Activated B cell treated with CpG ODN at 0.5 μM for 24 hours (primary cell): ENCODE measurements at regions of chr17 and their contacts with region 1.

Region 1: GRCh38 chr17:39730095-39730921 is at the start of gene MIEN1:
- DNase-seq: peak; percentile 99
- ATAC-seq: peak; percentile 91
- H3K4me3 Mint-ChIP-seq: peak within 1 kb of the TSS; percentile 88
- H3K27ac Mint-ChIP-seq: peak within 1 kb of the TSS; percentile 86
- H3K4me1 Mint-ChIP-seq: peaks cover 21% of the 10 kb centered on the region
- H3K27me3 Mint-ChIP-seq: no peaks in the 10 kb centered on the region
- CTCF ChIP-seq: peak; percentile 64
- total RNA-seq, gene MIEN1: 42.2 and 45.7 TPM in 2 replicates

Region 2: DNA sequence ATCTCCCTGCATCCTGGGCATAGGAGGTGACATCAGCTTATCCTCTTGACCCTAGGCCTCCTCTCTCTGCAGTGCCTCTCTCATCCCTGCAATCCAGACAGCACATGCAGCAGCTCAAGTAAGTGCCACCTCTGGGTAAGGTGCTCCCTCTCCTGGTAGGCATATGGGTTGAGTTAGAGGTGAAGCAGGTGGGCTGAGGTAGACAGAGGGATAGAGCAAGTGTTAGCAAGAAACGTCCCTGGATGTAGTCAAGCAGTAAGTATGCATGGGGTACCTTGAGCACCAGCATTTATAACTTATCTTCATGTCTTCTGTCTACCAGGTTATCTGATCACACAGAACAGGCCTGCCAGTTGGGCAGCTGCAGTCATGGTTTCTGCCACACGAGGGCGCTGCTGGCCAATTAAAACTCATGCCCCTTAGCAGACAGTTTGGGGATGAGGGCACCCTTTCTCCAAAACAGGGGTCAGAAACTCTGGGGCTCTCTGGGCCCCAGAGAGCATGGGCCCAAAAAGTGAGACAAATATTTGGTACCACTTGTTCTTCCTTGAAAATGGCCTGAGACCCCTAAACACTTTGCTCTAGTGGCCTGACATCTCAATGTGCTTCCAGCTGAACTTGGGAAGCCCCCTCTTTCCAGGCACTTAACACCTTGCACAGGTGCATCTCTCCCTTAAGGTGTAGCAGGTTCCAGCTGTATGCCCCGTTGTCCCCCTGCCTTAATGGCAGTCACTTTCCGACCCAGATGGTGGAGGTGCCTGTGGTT is 182.4 kb before region 1 on chr17:
- CTCF ChIA-PET with region 1: no interaction called
- POLR2A ChIA-PET with region 1: interaction called, 7 read pairs
- intact Hi-C with region 1: loop called (anchors 1 kb)
- DNase-seq: peak; percentile 74
- ATAC-seq: peak; percentile 65
- H3K4me3 Mint-ChIP-seq: no peak overlapping the region
- H3K27ac Mint-ChIP-seq: no peak overlapping the region
- H3K4me1 Mint-ChIP-seq: peaks cover 40% of the 10 kb centered on the region
- H3K27me3 Mint-ChIP-seq: no peaks in the 10 kb centered on the region
- CTCF ChIP-seq: peak; percentile 78

Region 3: DNA sequence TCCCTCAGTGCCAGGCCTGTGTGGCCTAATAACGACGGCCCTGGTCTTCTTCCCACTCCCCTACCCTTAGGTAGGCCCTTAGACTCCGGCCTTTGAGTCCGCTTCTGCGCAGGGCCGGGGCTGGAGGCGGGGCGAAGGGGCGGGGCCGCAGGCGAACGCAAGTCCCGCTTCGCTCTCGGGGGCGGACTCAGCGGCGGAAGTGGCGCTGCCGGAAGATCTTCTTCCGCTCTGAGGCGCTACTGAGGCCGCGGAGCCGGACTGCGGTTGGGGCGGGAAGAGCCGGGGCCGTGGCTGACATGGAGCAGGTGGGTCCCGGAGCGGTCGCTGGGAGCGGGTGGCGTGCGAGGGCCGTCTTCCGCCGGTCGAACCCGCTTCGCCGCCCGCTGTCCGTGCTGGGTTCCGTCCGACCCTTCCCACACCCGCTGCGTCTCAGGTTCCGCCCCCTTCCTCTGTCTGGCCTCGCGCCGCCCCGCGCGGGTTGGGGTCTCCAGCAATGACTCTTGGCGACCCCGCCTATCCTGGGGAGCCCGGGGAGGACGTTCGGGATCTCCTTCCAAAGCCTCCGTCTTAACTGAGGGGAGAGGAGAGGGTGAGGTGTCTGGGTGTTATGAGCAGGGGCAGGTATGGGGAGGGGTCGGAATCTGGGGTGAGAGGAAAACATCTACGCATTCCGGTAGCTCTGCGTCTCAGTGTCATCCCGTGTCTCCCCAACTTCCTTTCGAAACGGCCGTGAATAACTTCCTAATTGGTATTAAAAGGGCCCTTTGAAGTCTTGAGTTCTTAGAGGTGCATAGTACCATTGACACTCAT is 93.2 kb before region 1 on chr17 and contains the start of gene STARD3:
- CTCF ChIA-PET with region 1: interaction called, 7 read pairs
- POLR2A ChIA-PET with region 1: interaction called, 8 read pairs
- intact Hi-C with region 1: loop called (anchors 1 kb)
- DNase-seq: peak; percentile 90
- ATAC-seq: peak; percentile 92
- H3K4me3 Mint-ChIP-seq: peak within 1 kb of the TSS; percentile 90
- H3K27ac Mint-ChIP-seq: peak within 1 kb of the TSS; percentile 86
- H3K4me1 Mint-ChIP-seq: peaks cover 63% of the 10 kb centered on the region
- H3K27me3 Mint-ChIP-seq: no peaks in the 10 kb centered on the region
- CTCF ChIP-seq: no peak
- total RNA-seq, gene STARD3: 51.8 and 58.2 TPM in 2 replicates

Region 4: GRCh38 chr17:39668199-39668966 is 61.9 kb before region 1 on chr17 and contains the start of gene PNMT:
- CTCF ChIA-PET with region 1: interaction called, 7 read pairs
- POLR2A ChIA-PET with region 1: interaction called, 10 read pairs
- intact Hi-C with region 1: loop called (anchors 5 kb)
- DNase-seq: peak; percentile 70
- ATAC-seq: peak; percentile 83
- H3K4me3 Mint-ChIP-seq: peak within 1 kb of the TSS; percentile 71
- H3K27ac Mint-ChIP-seq: peak within 1 kb of the TSS; percentile 56
- H3K4me1 Mint-ChIP-seq: peaks cover 31% of the 10 kb centered on the region
- H3K27me3 Mint-ChIP-seq: peaks cover 12% of the 10 kb centered on the region
- CTCF ChIP-seq: peak; percentile 44
- total RNA-seq, gene PNMT: not detected in 2 replicates

Region 5: GRCh38 chr17:39676198-39676819 is 54.0 kb before region 1 on chr17:
- CTCF ChIA-PET with region 1: interaction called, 7 read pairs
- POLR2A ChIA-PET with region 1: interaction called, 14 read pairs
- intact Hi-C with region 1: no loop called
- DNase-seq: no peak
- ATAC-seq: peak; percentile 51
- H3K4me3 Mint-ChIP-seq: peak overlapping the region; percentile 29
- H3K27ac Mint-ChIP-seq: peak overlapping the region; percentile 90
- H3K4me1 Mint-ChIP-seq: peaks cover 87% of the 10 kb centered on the region
- H3K27me3 Mint-ChIP-seq: no peaks in the 10 kb centered on the region
- CTCF ChIP-seq: no peak

Region 6: DNA sequence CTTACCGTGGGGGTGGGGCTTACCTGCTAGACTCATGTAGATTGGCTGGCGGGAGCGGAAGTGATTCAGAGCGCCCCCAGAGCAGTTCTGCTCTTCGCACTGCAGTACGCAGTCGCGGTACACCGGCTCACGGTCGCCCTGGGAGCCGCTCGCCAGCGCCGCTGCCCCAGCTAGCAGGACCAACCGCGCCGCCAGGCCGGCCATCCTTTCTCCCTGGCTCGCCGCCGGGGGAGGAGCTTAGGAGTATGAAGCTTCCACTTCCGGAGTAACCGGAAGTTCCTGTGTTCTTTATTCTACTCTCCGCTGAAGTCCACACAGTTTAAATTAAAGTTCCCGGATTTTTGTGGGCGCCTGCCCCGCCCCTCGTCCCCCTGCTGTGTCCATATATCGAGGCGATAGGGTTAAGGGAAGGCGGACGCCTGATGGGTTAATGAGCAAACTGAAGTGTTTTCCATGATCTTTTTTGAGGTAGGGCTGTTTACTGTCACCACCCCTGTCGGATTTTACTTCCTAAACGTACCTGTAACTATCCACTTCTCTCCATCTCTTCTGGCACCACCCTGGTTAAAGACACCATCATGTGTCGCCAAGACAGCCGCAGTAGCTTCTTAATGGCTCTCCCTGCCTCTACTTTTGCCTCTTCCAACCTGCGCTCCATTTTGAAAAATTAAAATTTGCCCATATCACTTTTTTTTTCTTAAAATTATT is 42.3 kb before region 1 on chr17 and contains the start of gene PGAP3:
- CTCF ChIA-PET with region 1: interaction called, 6 read pairs
- POLR2A ChIA-PET with region 1: interaction called, 25 read pairs
- intact Hi-C with region 1: loop called (anchors 1 kb)
- DNase-seq: peak; percentile 78
- ATAC-seq: peak; percentile 95
- H3K4me3 Mint-ChIP-seq: peak within 1 kb of the TSS; percentile 99
- H3K27ac Mint-ChIP-seq: peak within 1 kb of the TSS; percentile 97
- H3K4me1 Mint-ChIP-seq: peaks cover 18% of the 10 kb centered on the region
- H3K27me3 Mint-ChIP-seq: no peaks in the 10 kb centered on the region
- CTCF ChIP-seq: no peak
- total RNA-seq, gene PGAP3: 19.0 and 24.0 TPM in 2 replicates

Region 7: GRCh38 chr17:39952680-39953470 is 222.6 kb after region 1 on chr17:
- CTCF ChIA-PET with region 1: no interaction called
- POLR2A ChIA-PET with region 1: no interaction called
- intact Hi-C with region 1: loop called (anchors 1 kb)
- DNase-seq: peak; percentile 88
- ATAC-seq: peak; percentile 85
- H3K4me3 Mint-ChIP-seq: peak overlapping the region; percentile 85
- H3K27ac Mint-ChIP-seq: peak overlapping the region; percentile 83
- H3K4me1 Mint-ChIP-seq: peaks cover 29% of the 10 kb centered on the region
- H3K27me3 Mint-ChIP-seq: no peaks in the 10 kb centered on the region
- CTCF ChIP-seq: no peak

Region 8: DNA sequence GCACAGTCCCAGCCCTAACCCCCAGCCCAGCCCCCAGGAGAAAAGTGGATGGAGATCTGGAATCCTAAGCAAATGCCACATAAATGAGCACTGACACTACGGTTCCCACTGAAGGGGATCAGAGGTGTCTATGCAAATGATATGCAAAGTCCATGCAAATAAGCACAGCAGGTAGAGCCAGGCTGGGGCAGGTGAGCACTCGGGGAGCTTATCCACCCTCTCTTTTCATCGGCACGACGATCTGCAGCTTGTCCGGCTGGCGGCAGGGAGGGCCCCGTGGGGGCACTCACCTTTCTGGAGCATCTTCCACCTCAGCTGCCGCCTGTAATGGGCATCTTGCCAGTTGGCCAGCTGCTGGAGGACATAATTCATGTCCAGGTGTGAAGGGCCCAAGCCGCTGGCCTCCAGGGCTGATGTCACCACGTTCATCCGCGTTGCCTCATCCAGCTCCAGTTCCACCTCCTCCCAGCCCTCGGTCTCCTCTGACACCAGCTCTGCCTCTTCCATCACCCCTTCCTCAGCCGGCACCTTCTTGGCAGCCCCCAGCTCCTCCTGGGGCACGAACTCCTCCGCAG is 1994.3 kb after region 1 on chr17:
- CTCF ChIA-PET with region 1: no interaction called
- POLR2A ChIA-PET with region 1: no interaction called
- intact Hi-C with region 1: no loop called
- DNase-seq: no peak
- ATAC-seq: no peak
- H3K4me3 Mint-ChIP-seq: no peak overlapping the region
- H3K27ac Mint-ChIP-seq: no peak overlapping the region
- H3K4me1 Mint-ChIP-seq: peaks cover 9% of the 10 kb centered on the region
- H3K27me3 Mint-ChIP-seq: peaks cover 14% of the 10 kb centered on the region
- CTCF ChIP-seq: no peak